HEK293 (cell line): ENCODE measurements at regions of chr6 and their contacts with region 1.

Region 1: GRCh38 chr6:159104163-159104925 is 59.6 kb upstream of the TAGAP start:
- H3K4me3 ChIP-seq: no peak overlapping the region
- H3K27ac ChIP-seq: no peak overlapping the region
- H3K4me1 ChIP-seq: no peaks in the 10 kb centered on the region
- CTCF ChIP-seq: peak; percentile 77

Region 2: DNA sequence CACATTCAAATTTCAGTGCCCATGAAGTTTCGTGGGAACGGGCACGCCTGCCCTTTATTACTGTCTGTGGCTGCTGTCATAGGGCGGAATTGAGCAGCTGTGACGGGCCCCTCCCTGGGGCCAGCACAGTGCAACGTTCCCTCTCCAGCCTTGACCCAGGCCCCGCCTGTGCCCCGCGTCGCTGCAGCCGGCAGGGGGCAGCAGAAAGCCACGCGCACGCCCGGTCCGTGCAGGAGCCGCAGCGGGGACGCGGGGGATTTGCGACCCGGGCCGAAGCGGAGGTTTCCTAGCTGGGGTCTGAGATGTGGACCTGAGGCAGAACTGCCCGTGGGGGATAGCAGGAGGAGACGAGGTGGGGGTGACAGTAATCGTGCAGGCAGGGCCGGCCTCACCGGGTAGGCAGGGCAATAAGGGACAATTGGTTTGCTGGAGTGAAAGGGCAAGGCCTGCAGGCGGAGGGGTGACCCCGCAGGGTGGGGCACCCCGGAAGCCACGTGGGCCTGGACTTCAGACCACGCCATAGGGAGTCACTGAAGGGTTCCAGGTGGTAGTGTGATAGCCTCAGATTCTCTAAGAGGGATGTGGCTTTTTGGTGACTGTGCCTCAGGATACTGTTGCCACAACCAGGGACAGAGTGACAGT is 400.0 kb before region 1 on chr6:
- CTCF ChIA-PET with region 1: interaction called, 12 read pairs
- POLR2A ChIA-PET with region 1: no interaction called
- H3K4me3 ChIP-seq: peak overlapping the region; percentile 41
- H3K27ac ChIP-seq: no peak overlapping the region
- H3K4me1 ChIP-seq: peaks cover 10% of the 10 kb centered on the region; the same call in 1 of the 2 replicates
- CTCF ChIP-seq: peak; percentile 99

Region 3: GRCh38 chr6:158999666-159000403 is 104.5 kb before region 1 on chr6 and contains the start of gene RSPH3:
- CTCF ChIA-PET with region 1: interaction called, 11 read pairs
- POLR2A ChIA-PET with region 1: no interaction called
- H3K4me3 ChIP-seq: peak within 1 kb of the TSS; percentile 75
- H3K27ac ChIP-seq: peak within 1 kb of the TSS; percentile 93
- H3K4me1 ChIP-seq: no peaks in the 10 kb centered on the region
- CTCF ChIP-seq: peak; percentile 84

Region 4: GRCh38 chr6:159008656-159009288 is 95.6 kb before region 1 on chr6:
- CTCF ChIA-PET with region 1: interaction called, 20 read pairs
- POLR2A ChIA-PET with region 1: no interaction called
- H3K4me3 ChIP-seq: no peak overlapping the region
- H3K27ac ChIP-seq: no peak overlapping the region
- H3K4me1 ChIP-seq: no peaks in the 10 kb centered on the region
- CTCF ChIP-seq: no peak

Region 5: DNA sequence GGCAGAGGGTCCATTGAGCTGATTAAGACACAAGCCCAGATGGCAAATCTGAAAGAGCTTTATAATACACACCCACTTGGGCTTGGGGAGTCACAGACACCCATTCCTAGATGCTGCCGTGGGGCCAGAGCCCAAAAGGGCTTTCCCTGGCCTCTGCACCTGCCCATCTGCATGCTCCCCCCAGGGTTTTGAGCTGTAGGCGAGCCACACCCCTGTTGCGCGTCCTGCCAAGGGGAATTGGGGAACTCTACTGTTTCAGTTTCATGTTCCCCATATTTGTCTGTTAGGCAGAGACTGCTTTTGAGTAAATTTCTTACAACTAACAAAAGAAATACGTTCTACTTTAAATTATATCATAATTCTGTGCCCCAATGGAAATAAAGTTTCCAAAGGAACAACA is 12.0 kb after region 1 on chr6:
- CTCF ChIA-PET with region 1: interaction called, 37 read pairs
- POLR2A ChIA-PET with region 1: no interaction called
- H3K4me3 ChIP-seq: no peak overlapping the region
- H3K27ac ChIP-seq: no peak overlapping the region
- H3K4me1 ChIP-seq: no peaks in the 10 kb centered on the region
- CTCF ChIP-seq: no peak